ENCODE measurements at regions of chr4 and their contacts with region 1.

Region 1: DNA sequence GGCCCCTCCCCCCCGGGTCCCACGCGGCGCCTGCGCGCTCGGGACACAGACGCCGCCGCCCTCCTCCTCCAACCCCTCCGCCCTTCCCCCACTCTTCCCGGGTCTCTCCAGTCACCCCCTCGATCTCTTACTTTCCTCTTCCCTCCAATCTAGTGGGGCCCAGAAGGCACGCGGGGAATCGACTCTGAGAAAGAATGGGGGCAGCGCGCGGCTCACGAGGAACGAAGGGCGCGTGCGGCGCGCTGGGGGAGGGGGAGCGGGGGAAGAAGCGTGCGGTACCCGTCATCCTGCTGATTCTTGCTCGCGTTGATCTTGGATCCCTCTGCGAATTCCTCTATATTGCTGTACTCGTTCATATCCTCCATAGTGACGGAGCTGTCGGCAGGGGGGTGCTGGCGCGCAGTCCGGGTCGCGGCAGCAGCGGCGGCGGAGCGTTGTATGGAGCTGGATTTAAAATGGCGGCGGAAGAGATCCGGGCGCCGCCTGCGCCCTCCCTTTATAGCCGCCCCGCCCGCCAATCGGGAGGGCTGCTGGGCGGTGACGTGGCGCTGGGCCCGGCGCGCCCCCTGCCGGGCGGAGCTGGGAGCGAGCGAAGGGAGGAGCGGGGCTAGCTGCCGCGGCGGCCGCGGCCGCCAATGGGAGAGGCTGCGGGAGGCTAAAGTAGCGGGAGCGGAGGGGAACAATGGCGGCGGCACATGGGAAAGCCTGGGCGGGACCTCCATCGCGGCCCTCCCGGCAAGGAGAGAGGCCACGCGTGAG is 1.1 kb downstream of the HNRNPDL start:
- DNase-seq: peak; percentile 90 to 99 (median 94)
- ATAC-seq: peak; percentile 79
- H3K4me3 ChIP-seq: peak overlapping the region; percentile 96
- H3K4me3 Mint-ChIP-seq: peak overlapping the region; percentile 98 to 100 (median 99)
- H3K27ac ChIP-seq: peak overlapping the region; percentile 99
- H3K27ac Mint-ChIP-seq: peak overlapping the region; percentile 98 to 100 (median 99)
- H3K4me1 ChIP-seq: peaks cover 28 to 39% of the 10 kb centered on the region in 2 donors
- H3K4me1 Mint-ChIP-seq: peaks cover 40 to 81% (median 69%) of the 10 kb centered on the region in 7 donors
- H3K27me3 ChIP-seq: no peaks in the 10 kb centered on the region
- H3K27me3 Mint-ChIP-seq: peaks cover 0 to 2% (median 0%) of the 10 kb centered on the region in 5 donors

Region 2: DNA sequence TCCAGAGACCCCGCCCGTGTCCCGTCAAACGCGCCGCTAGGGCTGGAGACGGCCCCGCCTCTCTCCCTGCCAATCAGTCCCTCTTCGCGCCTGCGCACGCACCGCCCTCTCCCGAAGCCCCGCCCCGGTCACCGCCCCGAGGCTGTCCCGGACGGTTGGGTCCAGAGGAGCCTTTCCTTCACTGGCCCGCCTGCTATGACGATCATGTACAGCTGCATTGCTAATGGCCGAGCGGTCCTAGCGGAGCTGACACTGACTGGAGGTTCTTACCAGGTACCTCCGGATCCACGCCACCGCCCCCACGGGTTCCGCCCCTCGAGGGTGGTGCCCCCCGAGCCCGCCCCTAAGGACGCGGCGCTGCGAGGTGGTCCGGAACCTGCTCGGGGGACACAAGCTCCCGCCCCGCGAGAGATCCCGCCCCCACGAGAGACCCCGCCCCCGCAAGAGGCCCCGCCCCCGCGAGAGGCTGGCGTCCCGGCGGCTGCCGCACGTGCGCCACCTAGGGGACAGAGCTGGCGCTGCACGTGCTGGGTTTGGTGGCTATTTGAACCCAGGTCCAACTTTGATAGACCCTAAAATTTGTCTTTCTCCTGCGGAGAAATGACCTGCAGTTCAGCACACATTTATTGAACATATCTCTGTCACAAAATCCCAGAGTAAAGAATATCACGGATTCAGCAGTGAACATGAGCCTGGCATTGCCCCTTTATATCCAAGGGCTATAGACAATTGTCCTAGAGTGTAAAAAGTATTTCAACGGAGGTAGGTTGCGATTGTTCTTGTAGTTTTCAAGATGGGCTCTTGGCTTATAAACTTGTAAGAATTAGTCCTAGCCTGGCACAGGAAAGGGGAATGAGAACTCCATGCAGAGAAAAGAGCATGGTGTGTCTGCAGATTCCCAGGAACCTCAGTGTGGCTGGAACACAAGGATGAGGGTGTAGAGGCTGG is 144.0 kb before region 1 on chr4:
- CTCF ChIA-PET with region 1: no interaction called
- POLR2A ChIA-PET with region 1: interaction called, 26 read pairs
- intact Hi-C with region 1: loop called (anchors 1 kb)
- DNase-seq: peak; percentile 97 to 100 (median 99)
- ATAC-seq: peak; percentile 94
- H3K4me3 ChIP-seq: peak overlapping the region; percentile 55
- H3K4me3 Mint-ChIP-seq: peak overlapping the region; percentile 70 to 91 (median 86)
- H3K27ac ChIP-seq: peak overlapping the region; percentile 71
- H3K27ac Mint-ChIP-seq: peak overlapping the region; percentile 53 to 94 (median 83)
- H3K4me1 ChIP-seq: peaks cover 4 to 11% of the 10 kb centered on the region in 2 donors
- H3K4me1 Mint-ChIP-seq: peaks cover 9 to 22% (median 13%) of the 10 kb centered on the region in 7 donors
- H3K27me3 ChIP-seq: no peaks in the 10 kb centered on the region
- H3K27me3 Mint-ChIP-seq: peaks cover 0 to 28% (median 0%) of the 10 kb centered on the region in 5 donors

Region 3: DNA sequence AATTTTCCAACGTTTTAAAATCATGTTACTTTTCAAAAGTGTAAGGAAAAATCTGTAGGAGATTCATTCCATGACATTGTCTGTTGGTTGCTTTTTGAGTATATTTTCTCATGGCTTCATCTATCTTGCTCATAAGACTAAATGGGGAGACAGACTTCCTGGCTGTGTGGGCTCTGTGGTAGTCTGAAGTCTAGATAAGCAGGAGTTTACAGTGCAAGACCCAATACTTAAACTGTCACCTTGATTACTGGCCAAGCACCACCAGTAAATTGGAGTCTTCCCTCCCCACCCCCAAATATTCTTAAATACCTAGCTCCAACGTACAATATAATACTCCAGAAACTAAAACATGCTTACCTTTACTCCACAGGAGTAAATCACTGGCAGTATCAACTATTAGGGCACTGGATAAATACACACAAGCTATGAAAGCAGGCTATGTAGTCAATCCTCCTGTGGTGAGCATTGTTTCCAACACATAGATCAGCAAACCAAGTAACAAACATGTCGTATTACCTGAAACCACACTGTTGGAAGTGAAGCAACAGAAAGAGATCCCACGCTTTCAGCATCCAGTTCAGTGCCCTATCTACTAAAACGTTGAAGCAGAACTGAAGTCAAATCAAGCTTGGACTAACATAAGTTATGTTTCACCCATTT is 61.6 kb before region 1 on chr4:
- CTCF ChIA-PET with region 1: interaction called, 18 read pairs
- POLR2A ChIA-PET with region 1: interaction called, 33 read pairs
- intact Hi-C with region 1: no loop called
- DNase-seq: no peak
- ATAC-seq: no peak
- H3K4me3 ChIP-seq: no peak overlapping the region
- H3K4me3 Mint-ChIP-seq: peak overlapping the region; percentile 8 to 100 (median 68)
- H3K27ac ChIP-seq: peak overlapping the region; percentile 43
- H3K27ac Mint-ChIP-seq: peak overlapping the region in 8 of 9 donors; percentile 2 to 83 (median 37)
- H3K4me1 ChIP-seq: peaks cover 66 to 67% of the 10 kb centered on the region in 2 donors
- H3K4me1 Mint-ChIP-seq: peaks cover 58 to 91% (median 84%) of the 10 kb centered on the region in 7 donors
- H3K27me3 ChIP-seq: no peaks in the 10 kb centered on the region
- H3K27me3 Mint-ChIP-seq: no peaks in the 10 kb centered on the region

Region 4: GRCh38 chr4:82462415-82462831 is 33.3 kb after region 1 on chr4:
- CTCF ChIA-PET with region 1: interaction called, 3 read pairs
- POLR2A ChIA-PET with region 1: interaction called, 3 read pairs
- intact Hi-C with region 1: loop called in 1 of 2 experiments (anchors 1 kb)
- DNase-seq: peak; percentile 60 to 83 (median 79)
- ATAC-seq: peak; percentile 96
- H3K4me3 ChIP-seq: no peak overlapping the region
- H3K4me3 Mint-ChIP-seq: no peak overlapping the region
- H3K27ac ChIP-seq: no peak overlapping the region
- H3K27ac Mint-ChIP-seq: peak overlapping the region in 1 of 9 donors; percentile 34
- H3K4me1 ChIP-seq: no peaks in the 10 kb centered on the region
- H3K4me1 Mint-ChIP-seq: peaks cover 0 to 5% (median 0%) of the 10 kb centered on the region in 7 donors
- H3K27me3 ChIP-seq: no peaks in the 10 kb centered on the region
- H3K27me3 Mint-ChIP-seq: no peaks in the 10 kb centered on the region

Region 5: GRCh38 chr4:83034630-83035494 is 605.7 kb after region 1 on chr4 and contains the start of gene COPS4:
- CTCF ChIA-PET with region 1: no interaction called
- POLR2A ChIA-PET with region 1: interaction called, 14 read pairs
- intact Hi-C with region 1: loop called (anchors 1 kb)
- DNase-seq: peak; percentile 77 to 98 (median 97)
- ATAC-seq: peak; percentile 99
- H3K4me3 ChIP-seq: peak within 1 kb of the TSS; percentile 98
- H3K4me3 Mint-ChIP-seq: peak within 1 kb of the TSS; percentile 92 to 100 (median 98)
- H3K27ac ChIP-seq: peak within 1 kb of the TSS; percentile 94
- H3K27ac Mint-ChIP-seq: peak within 1 kb of the TSS; percentile 94 to 100 (median 97)
- H3K4me1 ChIP-seq: peaks cover 4 to 19% of the 10 kb centered on the region in 2 donors
- H3K4me1 Mint-ChIP-seq: peaks cover 19 to 44% (median 35%) of the 10 kb centered on the region in 7 donors
- H3K27me3 ChIP-seq: no peaks in the 10 kb centered on the region
- H3K27me3 Mint-ChIP-seq: no peaks in the 10 kb centered on the region
- total RNA-seq, gene COPS4: 23.5 to 32.8 (median 24.7) TPM

Region 6: GRCh38 chr4:83074086-83074704 is 645.0 kb after region 1 on chr4:
- CTCF ChIA-PET with region 1: no interaction called
- POLR2A ChIA-PET with region 1: no interaction called
- intact Hi-C with region 1: no loop called
- DNase-seq: peak in 8 of 9 donors; percentile 49 to 91 (median 85)
- ATAC-seq: peak; percentile 99
- H3K4me3 ChIP-seq: no peak overlapping the region
- H3K4me3 Mint-ChIP-seq: peak overlapping the region; percentile 43 to 85 (median 76)
- H3K27ac ChIP-seq: no peak overlapping the region
- H3K27ac Mint-ChIP-seq: peak overlapping the region; percentile 19 to 87 (median 79)
- H3K4me1 ChIP-seq: peaks cover 0 to 6% of the 10 kb centered on the region in 2 donors
- H3K4me1 Mint-ChIP-seq: peaks cover 8 to 28% (median 14%) of the 10 kb centered on the region in 7 donors
- H3K27me3 ChIP-seq: no peaks in the 10 kb centered on the region
- H3K27me3 Mint-ChIP-seq: no peaks in the 10 kb centered on the region